ENCODE measurements at regions of chr2 and their contacts with region 1.

Region 1: GRCh38 chr2:53767405-53768241 is at the start of gene CHAC2:
- DNase-seq: peak; percentile 91
- H3K4me3 Mint-ChIP-seq: peak within 1 kb of the TSS; percentile 93
- H3K27ac Mint-ChIP-seq: peak within 1 kb of the TSS; percentile 97
- H3K4me1 Mint-ChIP-seq: peaks cover 27% of the 10 kb centered on the region
- H3K27me3 Mint-ChIP-seq: no peaks in the 10 kb centered on the region
- total RNA-seq, gene CHAC2: 13.2 to 15.0 TPM

Region 2: DNA sequence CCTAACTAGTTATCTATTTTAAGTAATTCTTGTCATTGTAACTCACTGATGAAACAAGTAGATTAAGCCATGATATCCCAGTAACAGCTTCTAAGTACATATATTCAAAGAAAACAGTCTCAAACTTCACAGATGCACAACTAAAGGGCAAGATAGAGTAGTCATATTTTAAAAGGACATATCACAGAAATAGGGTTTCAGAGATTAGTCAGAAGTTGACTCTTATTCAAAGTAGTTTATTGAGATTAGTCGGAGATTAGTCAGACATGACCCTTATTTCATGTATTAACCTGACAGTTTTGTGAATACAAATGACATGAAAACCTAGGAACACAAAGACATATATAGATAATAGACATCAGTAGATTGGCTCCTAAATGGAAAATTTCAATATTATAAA is 15.9 kb before region 1 on chr2:
- CTCF ChIA-PET with region 1: no interaction called
- POLR2A ChIA-PET with region 1: interaction called, 5 read pairs
- intact Hi-C with region 1: loop called (anchors 1 kb)
- DNase-seq: no peak
- H3K4me3 Mint-ChIP-seq: no peak overlapping the region
- H3K27ac Mint-ChIP-seq: no peak overlapping the region
- H3K4me1 Mint-ChIP-seq: peaks cover 24% of the 10 kb centered on the region
- H3K27me3 Mint-ChIP-seq: no peaks in the 10 kb centered on the region

Measured in activated CD4-positive, alpha-beta memory T cell treated with anti-CD3 and anti-CD28 coated beads for 36 hours (primary cell).